K562 (cell line): ENCODE measurements at regions of chr16 and their contacts with region 1.

Region 1: GRCh38 chr16:5228369-5228768 is 130.8 kb upstream of the EEF2KMT start:
- DNase-seq: no peak
- ATAC-seq: no peak
- H3K4me3 ChIP-seq: no peak overlapping the region
- H3K27ac ChIP-seq: no peak overlapping the region
- H3K4me1 ChIP-seq: no peaks in the 10 kb centered on the region
- H3K27me3 ChIP-seq: peaks cover 0 to 5% of the 10 kb centered on the region in 2 experiments; a peak in 1 of 5 replicates
- CTCF ChIP-seq: no peak
- EP300 ChIP-seq: no peak
- POLR2A ChIP-seq: no peak
- RAD21 ChIP-seq: no peak

Region 2: GRCh38 chr16:5490499-5490898 is 262.1 kb after region 1 on chr16:
- CTCF ChIA-PET with region 1: no interaction called
- POLR2A ChIA-PET with region 1: no interaction called
- in situ Hi-C with region 1: loop called (anchors 25 kb)
- intact Hi-C with region 1: no loop called
- DNase-seq: peak; percentile 59 to 77 (median 73)
- ATAC-seq: peak; percentile 78
- H3K4me3 ChIP-seq: no peak overlapping the region
- H3K27ac ChIP-seq: no peak overlapping the region
- H3K4me1 ChIP-seq: peaks cover 0 to 3% of the 10 kb centered on the region in 2 experiments; a peak in 1 of 5 replicates
- H3K27me3 ChIP-seq: no peaks in the 10 kb centered on the region
- CTCF ChIP-seq: peak; percentile 79 to 95 (median 85)
- EP300 ChIP-seq: no peak
- POLR2A ChIP-seq: no peak
- RAD21 ChIP-seq: peak; percentile 26 to 76

Region 3: GRCh38 chr16:5615868-5616642 is 387.7 kb after region 1 on chr16:
- CTCF ChIA-PET with region 1: no interaction called
- POLR2A ChIA-PET with region 1: no interaction called
- in situ Hi-C with region 1: loop called (anchors 25 kb)
- intact Hi-C with region 1: no loop called
- DNase-seq: peak; percentile 86 to 89 (median 88)
- ATAC-seq: peak; percentile 100
- H3K4me3 ChIP-seq: no peak overlapping the region
- H3K27ac ChIP-seq: no peak overlapping the region
- H3K4me1 ChIP-seq: peaks cover 0 to 5% of the 10 kb centered on the region in 2 experiments; a peak in 3 of 5 replicates
- H3K27me3 ChIP-seq: peaks cover 0 to 14% of the 10 kb centered on the region in 2 experiments; a peak in 3 of 5 replicates
- CTCF ChIP-seq: peak; percentile 86 to 92 (median 87)
- EP300 ChIP-seq: no peak
- POLR2A ChIP-seq: no peak
- RAD21 ChIP-seq: peak; percentile 30 to 73; a peak in 3 of 4 replicates